CD4-positive, alpha-beta T cell (primary cell): ENCODE measurements at regions of chr9 and their contacts with region 1.

Region 1: GRCh38 chr9:105244003-105244733 is at the start of gene SLC44A1:
- DNase-seq: peak; percentile 84 to 96 (median 93)
- ATAC-seq: peak; percentile 86
- H3K4me3 ChIP-seq: peak within 1 kb of the TSS; percentile 73
- H3K4me3 Mint-ChIP-seq: peak within 1 kb of the TSS; percentile 93
- H3K27ac ChIP-seq: peak within 1 kb of the TSS; percentile 57 to 78
- H3K27ac Mint-ChIP-seq: peak within 1 kb of the TSS; percentile 94
- H3K4me1 ChIP-seq: peaks cover 15% of the 10 kb centered on the region
- H3K4me1 Mint-ChIP-seq: peaks cover 45% of the 10 kb centered on the region
- H3K27me3 ChIP-seq: peaks cover 0 to 6% of the 10 kb centered on the region in 2 experiments
- H3K27me3 Mint-ChIP-seq: peaks cover 26% of the 10 kb centered on the region
- CTCF ChIP-seq: no peak
- total RNA-seq, gene SLC44A1: 5.1 to 5.9 TPM

Region 2: GRCh38 chr9:104093647-104094533 is 1150.3 kb before region 1 on chr9 and contains the start of gene SMC2:
- CTCF ChIA-PET with region 1: no interaction called
- POLR2A ChIA-PET with region 1: interaction called, 3 read pairs
- intact Hi-C with region 1: loop called in 1 of 2 experiments (anchors 2 kb)
- DNase-seq: peak; percentile 90 to 96 (median 92)
- ATAC-seq: peak; percentile 93
- H3K4me3 ChIP-seq: peak within 1 kb of the TSS; percentile 71
- H3K4me3 Mint-ChIP-seq: peak within 1 kb of the TSS; percentile 99
- H3K27ac ChIP-seq: peak within 1 kb of the TSS; percentile 80 to 92
- H3K27ac Mint-ChIP-seq: peak within 1 kb of the TSS; percentile 99
- H3K4me1 ChIP-seq: peaks cover 15% of the 10 kb centered on the region
- H3K4me1 Mint-ChIP-seq: peaks cover 60% of the 10 kb centered on the region
- H3K27me3 ChIP-seq: no peaks in the 10 kb centered on the region
- H3K27me3 Mint-ChIP-seq: no peaks in the 10 kb centered on the region
- CTCF ChIP-seq: no peak
- total RNA-seq, gene SMC2: 2.6 to 2.9 TPM

Region 3: GRCh38 chr9:104927912-104928740 is 316.0 kb before region 1 on chr9 and contains the start of gene ABCA1:
- CTCF ChIA-PET with region 1: no interaction called
- POLR2A ChIA-PET with region 1: interaction called, 3 read pairs
- intact Hi-C with region 1: loop called in 1 of 2 experiments (anchors 5 kb)
- DNase-seq: peak; percentile 57 to 89 (median 74)
- ATAC-seq: peak; percentile 81
- H3K4me3 ChIP-seq: peak within 1 kb of the TSS; percentile 69
- H3K4me3 Mint-ChIP-seq: peak within 1 kb of the TSS; percentile 92
- H3K27ac ChIP-seq: peak within 1 kb of the TSS in 1 of 2 donors; percentile 15
- H3K27ac Mint-ChIP-seq: peak within 1 kb of the TSS; percentile 86
- H3K4me1 ChIP-seq: peaks cover 27% of the 10 kb centered on the region
- H3K4me1 Mint-ChIP-seq: peaks cover 26% of the 10 kb centered on the region
- H3K27me3 ChIP-seq: no peaks in the 10 kb centered on the region
- H3K27me3 Mint-ChIP-seq: no peaks in the 10 kb centered on the region
- CTCF ChIP-seq: no peak
- total RNA-seq, gene ABCA1: 14.1 to 16.9 TPM

Region 4: GRCh38 chr9:104958751-104959150 is 285.4 kb before region 1 on chr9:
- CTCF ChIA-PET with region 1: no interaction called
- POLR2A ChIA-PET with region 1: no interaction called
- intact Hi-C with region 1: no loop called
- DNase-seq: no peak
- ATAC-seq: no peak
- H3K4me3 ChIP-seq: no peak overlapping the region
- H3K4me3 Mint-ChIP-seq: no peak overlapping the region
- H3K27ac ChIP-seq: no peak overlapping the region
- H3K27ac Mint-ChIP-seq: no peak overlapping the region
- H3K4me1 ChIP-seq: peaks cover 14% of the 10 kb centered on the region
- H3K4me1 Mint-ChIP-seq: peaks cover 32% of the 10 kb centered on the region
- H3K27me3 ChIP-seq: no peaks in the 10 kb centered on the region
- H3K27me3 Mint-ChIP-seq: no peaks in the 10 kb centered on the region
- CTCF ChIP-seq: no peak

Region 5: DNA sequence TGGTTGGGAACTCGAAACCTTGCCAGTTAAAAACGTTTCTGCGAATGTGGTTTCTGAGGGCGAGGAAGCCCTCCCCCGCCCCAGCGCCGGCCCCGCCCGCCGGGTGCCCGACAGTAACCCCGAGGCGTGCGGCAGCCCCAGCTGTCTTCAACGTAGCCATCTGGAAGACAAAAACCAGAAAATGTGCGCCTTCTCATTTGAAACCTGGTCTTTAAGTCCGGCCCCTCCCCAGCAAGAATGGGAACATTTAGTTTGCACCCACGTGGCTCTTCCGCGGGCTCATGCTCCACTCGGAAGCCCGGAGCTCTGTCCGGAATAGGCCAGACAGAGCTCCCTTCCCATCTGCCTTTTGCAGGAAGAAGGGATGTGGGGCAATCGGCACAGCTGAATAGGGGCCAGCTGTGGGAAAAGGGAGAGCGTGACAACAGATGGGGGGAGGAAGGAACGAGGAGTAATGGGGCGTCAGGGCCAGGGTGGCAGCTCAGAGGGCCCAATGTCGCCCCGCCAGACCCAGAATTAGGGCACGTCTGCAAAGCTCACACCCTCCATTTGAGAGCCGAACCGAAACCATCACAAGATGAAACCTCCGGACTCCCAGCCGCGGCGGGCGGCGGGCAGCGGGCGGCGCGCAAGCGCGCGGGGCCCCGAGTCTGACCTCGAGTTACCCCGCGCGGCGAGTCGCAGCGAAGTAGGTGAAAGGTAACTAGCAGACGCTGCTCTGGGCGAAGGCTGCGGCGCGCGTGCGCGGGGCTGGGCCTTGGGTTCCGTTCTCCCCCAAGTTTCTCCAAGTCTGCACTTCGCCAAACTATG is 252.8 kb before region 1 on chr9:
- CTCF ChIA-PET with region 1: interaction called, 3 read pairs
- POLR2A ChIA-PET with region 1: interaction called, 8 read pairs
- intact Hi-C with region 1: loop called in 1 of 2 experiments (anchors 5 kb)
- DNase-seq: peak; percentile 64 to 93 (median 80)
- ATAC-seq: peak; percentile 78
- H3K4me3 ChIP-seq: peak overlapping the region; percentile 72
- H3K4me3 Mint-ChIP-seq: peak overlapping the region; percentile 98
- H3K27ac ChIP-seq: peak overlapping the region; percentile 93
- H3K27ac Mint-ChIP-seq: peak overlapping the region; percentile 100
- H3K4me1 ChIP-seq: peaks cover 38% of the 10 kb centered on the region
- H3K4me1 Mint-ChIP-seq: peaks cover 41% of the 10 kb centered on the region
- H3K27me3 ChIP-seq: no peaks in the 10 kb centered on the region
- H3K27me3 Mint-ChIP-seq: peaks cover 19% of the 10 kb centered on the region
- CTCF ChIP-seq: no peak

Region 6: DNA sequence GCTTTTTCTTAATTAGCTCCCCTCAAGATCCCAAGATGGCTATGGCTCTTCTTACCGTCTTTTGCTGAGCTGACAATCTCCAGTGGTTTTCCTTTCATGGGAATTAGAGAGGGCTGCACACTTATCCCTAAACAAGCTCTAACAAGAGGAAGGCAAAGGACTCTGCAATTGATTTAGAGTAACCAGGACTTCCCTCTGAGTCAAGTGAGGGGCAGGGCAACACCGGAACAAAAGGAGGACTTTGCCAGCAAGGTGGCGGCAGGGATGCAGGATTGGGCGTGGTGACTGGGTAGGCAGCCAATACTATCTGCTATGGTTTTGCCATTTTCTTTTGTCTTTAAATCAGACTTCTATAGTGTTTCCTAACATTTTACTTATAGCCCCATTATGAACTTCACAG is 10.1 kb after region 1 on chr9:
- CTCF ChIA-PET with region 1: no interaction called
- POLR2A ChIA-PET with region 1: interaction called, 16 read pairs
- intact Hi-C with region 1: no loop called
- DNase-seq: no peak
- ATAC-seq: no peak
- H3K4me3 ChIP-seq: no peak overlapping the region
- H3K4me3 Mint-ChIP-seq: no peak overlapping the region
- H3K27ac ChIP-seq: no peak overlapping the region
- H3K27ac Mint-ChIP-seq: no peak overlapping the region
- H3K4me1 ChIP-seq: no peaks in the 10 kb centered on the region
- H3K4me1 Mint-ChIP-seq: peaks cover 31% of the 10 kb centered on the region
- H3K27me3 ChIP-seq: no peaks in the 10 kb centered on the region
- H3K27me3 Mint-ChIP-seq: no peaks in the 10 kb centered on the region
- CTCF ChIP-seq: no peak

Region 7: DNA sequence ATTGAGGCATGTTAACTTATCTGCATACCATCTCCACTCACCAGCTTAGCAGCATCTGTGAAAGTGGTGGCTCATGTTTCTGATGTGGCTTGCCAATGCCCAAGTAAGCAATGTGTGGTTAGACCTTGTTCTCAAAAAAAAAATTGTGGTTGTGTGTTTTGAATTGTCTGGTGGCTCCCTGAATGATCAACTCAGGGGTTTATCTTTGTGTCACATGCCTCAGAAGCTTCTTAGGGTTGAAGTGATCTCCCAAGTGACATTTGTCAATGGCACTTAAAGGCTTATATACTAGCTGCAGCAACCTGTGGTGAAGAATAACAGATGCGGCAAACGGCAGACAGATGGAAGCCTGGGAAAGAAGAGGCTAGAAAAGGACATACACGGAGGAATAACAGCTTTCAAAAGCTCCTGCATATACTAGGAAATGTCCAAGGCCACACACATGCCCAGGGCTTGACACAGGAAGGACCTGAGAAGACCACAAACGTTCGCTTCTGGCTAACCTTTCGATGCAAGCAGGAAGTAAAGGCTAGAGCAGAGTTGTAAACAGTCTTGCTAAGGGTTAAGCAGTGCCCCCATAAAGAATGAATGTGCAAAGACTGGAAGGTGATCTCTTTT is 161.5 kb after region 1 on chr9:
- CTCF ChIA-PET with region 1: interaction called, 3 read pairs
- POLR2A ChIA-PET with region 1: interaction called, 22 read pairs
- intact Hi-C with region 1: loop called in 1 of 2 experiments (anchors 1 kb)
- DNase-seq: peak in 13 of 14 experiments; percentile 20 to 87 (median 43)
- ATAC-seq: peak; percentile 90
- H3K4me3 ChIP-seq: no peak overlapping the region
- H3K4me3 Mint-ChIP-seq: peak overlapping the region; percentile 21
- H3K27ac ChIP-seq: no peak overlapping the region
- H3K27ac Mint-ChIP-seq: peak overlapping the region; percentile 70
- H3K4me1 ChIP-seq: peaks cover 24% of the 10 kb centered on the region
- H3K4me1 Mint-ChIP-seq: peaks cover 33% of the 10 kb centered on the region
- H3K27me3 ChIP-seq: peaks cover 25 to 33% of the 10 kb centered on the region in 2 experiments
- H3K27me3 Mint-ChIP-seq: peaks cover 73% of the 10 kb centered on the region
- CTCF ChIP-seq: no peak

Region 8: GRCh38 chr9:105557771-105558610 is 313.8 kb after region 1 on chr9 and contains the start of gene FKTN:
- CTCF ChIA-PET with region 1: no interaction called
- POLR2A ChIA-PET with region 1: no interaction called
- intact Hi-C with region 1: loop called in 1 of 2 experiments (anchors 5 kb)
- DNase-seq: peak; percentile 56 to 87 (median 72)
- ATAC-seq: peak; percentile 96
- H3K4me3 ChIP-seq: peak within 1 kb of the TSS; percentile 94
- H3K4me3 Mint-ChIP-seq: peak within 1 kb of the TSS; percentile 93
- H3K27ac ChIP-seq: peak within 1 kb of the TSS; percentile 30 to 47
- H3K27ac Mint-ChIP-seq: peak within 1 kb of the TSS; percentile 83
- H3K4me1 ChIP-seq: peaks cover 12% of the 10 kb centered on the region
- H3K4me1 Mint-ChIP-seq: peaks cover 19% of the 10 kb centered on the region
- H3K27me3 ChIP-seq: no peaks in the 10 kb centered on the region
- H3K27me3 Mint-ChIP-seq: no peaks in the 10 kb centered on the region
- CTCF ChIP-seq: no peak
- total RNA-seq, gene FKTN: 5.7 to 5.8 TPM